HCT116 (cell line): ENCODE measurements at regions of chr1 and their contacts with region 1.

Region 1: GRCh38 chr1:17661546-17662157 is 93.5 kb upstream of the ACTL8 start:
- DNase-seq: peak; percentile 12
- ATAC-seq: peak; percentile 83
- H3K4me3 ChIP-seq: no peak overlapping the region
- H3K27ac ChIP-seq: no peak overlapping the region
- H3K4me1 ChIP-seq: 0 out of 4 replicates have a peak, but pooled peaks cover 0 to 4% of the 10 kb centered on the region in 2 experiments
- H3K27me3 ChIP-seq: no peaks in the 10 kb centered on the region
- CTCF ChIP-seq: peak; percentile 64 to 95 (median 84)
- POLR2A ChIP-seq: no peak
- RAD21 ChIP-seq: peak; percentile 84

Region 2: DNA sequence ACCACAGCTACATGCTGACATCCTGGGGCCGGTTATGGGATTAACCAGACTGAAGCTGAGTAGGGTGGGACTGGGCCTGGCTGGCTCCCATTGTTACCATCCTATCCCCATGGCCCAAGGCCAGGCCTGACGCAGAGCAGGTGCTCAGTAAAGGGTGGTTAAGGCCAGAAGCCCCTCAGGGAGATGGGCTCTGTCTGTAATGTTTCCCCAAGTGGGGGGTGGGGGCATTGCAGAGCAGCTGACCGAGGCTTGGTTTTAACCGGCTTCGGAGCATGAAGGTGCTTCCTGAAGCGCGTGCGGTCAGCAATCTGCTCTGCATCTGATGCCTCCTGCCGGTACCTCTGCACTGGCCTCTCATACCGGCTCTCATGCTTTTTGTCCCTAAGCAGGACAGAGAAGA is 10.1 kb after region 1 on chr1:
- CTCF ChIA-PET with region 1: no interaction called
- POLR2A ChIA-PET with region 1: no interaction called
- RAD21 ChIA-PET with region 1: no interaction called
- intact Hi-C with region 1: no loop called
- DNase-seq: no peak
- ATAC-seq: no peak
- H3K4me3 ChIP-seq: no peak overlapping the region
- H3K27ac ChIP-seq: no peak overlapping the region
- H3K4me1 ChIP-seq: no peaks in the 10 kb centered on the region
- H3K27me3 ChIP-seq: no peaks in the 10 kb centered on the region
- CTCF ChIP-seq: no peak
- POLR2A ChIP-seq: no peak
- RAD21 ChIP-seq: no peak

Region 3: DNA sequence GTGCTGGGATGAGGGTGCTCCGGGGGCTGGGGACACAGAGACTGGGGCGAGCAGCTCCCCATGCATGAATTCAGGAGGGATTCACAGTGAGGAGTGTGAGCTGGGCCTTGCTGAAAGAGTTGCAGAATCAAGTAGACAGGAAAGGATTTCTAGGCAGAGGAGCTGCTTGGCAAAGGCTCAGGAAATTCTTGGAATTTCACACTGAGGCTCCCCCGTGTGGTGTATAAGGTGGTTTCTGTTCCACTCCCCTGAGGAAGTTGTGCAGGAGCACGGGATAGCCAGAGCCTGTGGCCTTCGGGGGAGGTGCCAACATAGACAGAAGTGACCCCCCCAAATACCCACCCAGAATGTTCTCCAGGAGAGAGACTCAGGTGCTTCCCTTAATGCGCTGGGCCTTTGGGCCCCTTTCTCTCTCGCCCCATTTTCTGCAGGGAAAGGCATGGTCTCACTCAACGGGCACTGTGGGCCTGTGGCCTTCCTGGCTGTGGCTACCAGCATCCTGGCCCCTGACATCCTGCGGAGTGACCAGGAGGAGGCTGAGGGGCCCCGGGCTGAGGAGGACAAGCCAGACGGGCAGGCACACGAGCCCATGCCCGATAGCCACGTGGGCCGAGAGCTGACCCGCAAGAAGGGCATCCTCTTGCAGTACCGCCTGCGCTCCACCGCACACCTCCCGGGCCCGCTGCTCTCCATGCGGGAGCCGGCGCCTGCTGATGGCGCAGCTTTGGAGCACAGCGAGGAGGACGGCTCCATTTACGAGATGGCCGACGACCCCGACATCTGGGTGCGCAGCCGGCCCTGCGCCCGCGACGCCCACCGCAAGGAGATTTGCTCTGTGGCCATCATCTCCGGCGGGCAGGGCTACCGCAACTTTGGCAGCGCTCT is 35.0 kb after region 1 on chr1:
- CTCF ChIA-PET with region 1: interaction called, 7 read pairs
- POLR2A ChIA-PET with region 1: no interaction called
- RAD21 ChIA-PET with region 1: no interaction called
- intact Hi-C with region 1: loop called (anchors 2 kb)
- DNase-seq: peak; percentile 7
- ATAC-seq: peak; percentile 89
- H3K4me3 ChIP-seq: no peak overlapping the region
- H3K27ac ChIP-seq: no peak overlapping the region
- H3K4me1 ChIP-seq: peaks cover 4 to 6% of the 10 kb centered on the region in 2 experiments
- H3K27me3 ChIP-seq: no peaks in the 10 kb centered on the region
- CTCF ChIP-seq: peak; percentile 35 to 56 (median 48); a peak in 5 of 6 replicates
- POLR2A ChIP-seq: no peak
- RAD21 ChIP-seq: 0 out of 2 replicates have a peak, but pooled peaks have one; percentile 38

Region 4: GRCh38 chr1:17998889-17999288 is 337.2 kb after region 1 on chr1:
- CTCF ChIA-PET with region 1: no interaction called
- POLR2A ChIA-PET with region 1: no interaction called
- RAD21 ChIA-PET with region 1: no interaction called
- intact Hi-C with region 1: loop called (anchors 1 kb)
- DNase-seq: no peak
- ATAC-seq: peak; percentile 78
- H3K4me3 ChIP-seq: no peak overlapping the region
- H3K27ac ChIP-seq: no peak overlapping the region
- H3K4me1 ChIP-seq: no peaks in the 10 kb centered on the region
- H3K27me3 ChIP-seq: peaks cover 36% of the 10 kb centered on the region
- CTCF ChIP-seq: peak in 2 of 3 experiments; percentile 50 to 53; a peak in 4 of 6 replicates
- POLR2A ChIP-seq: no peak
- RAD21 ChIP-seq: peak; percentile 14; the same call in 1 of the 2 replicates

Region 5: DNA sequence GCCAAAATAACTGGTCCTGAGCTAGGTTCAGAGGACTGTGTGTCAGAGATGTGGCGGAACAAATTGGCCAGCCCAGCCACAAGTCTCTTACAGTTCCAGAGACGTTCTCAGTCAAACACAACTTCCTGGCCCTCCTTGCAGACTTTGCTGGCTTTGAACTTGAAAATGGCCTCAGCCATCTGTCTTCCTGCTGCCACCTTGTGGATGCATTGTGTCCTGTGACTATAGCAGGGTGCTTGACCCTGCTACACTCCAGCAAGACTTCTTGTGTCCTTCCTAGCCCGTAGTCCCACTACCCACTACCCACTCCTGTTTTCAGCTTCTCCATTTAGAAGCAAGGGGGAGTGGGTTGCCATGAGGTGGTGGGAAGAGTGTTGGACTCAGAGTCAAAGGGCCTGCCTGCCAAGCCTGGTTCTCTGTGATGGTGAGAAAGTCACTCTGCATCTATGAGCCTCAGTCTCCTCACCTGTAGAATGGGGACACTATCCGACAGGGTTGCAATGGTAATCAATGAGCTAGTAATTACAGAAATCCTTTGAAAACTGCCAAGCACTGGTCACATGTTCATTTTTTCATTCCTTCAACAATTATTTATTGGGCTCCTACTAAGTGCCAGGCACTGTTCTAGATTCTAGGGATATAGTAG is 555.9 kb after region 1 on chr1:
- CTCF ChIA-PET with region 1: no interaction called
- POLR2A ChIA-PET with region 1: no interaction called
- RAD21 ChIA-PET with region 1: no interaction called
- intact Hi-C with region 1: loop called (anchors 1 kb)
- DNase-seq: peak; percentile 31
- ATAC-seq: peak; percentile 89
- H3K4me3 ChIP-seq: no peak overlapping the region
- H3K27ac ChIP-seq: no peak overlapping the region
- H3K4me1 ChIP-seq: no peaks in the 10 kb centered on the region
- H3K27me3 ChIP-seq: peaks cover 51% of the 10 kb centered on the region
- CTCF ChIP-seq: peak; percentile 56 to 78 (median 71); a peak in 5 of 6 replicates
- POLR2A ChIP-seq: no peak
- RAD21 ChIP-seq: peak; percentile 63; the same call in 1 of the 2 replicates